CD14-positive monocyte (primary cell): ENCODE measurements at regions of chr20 and their contacts with region 1.

Region 1: DNA sequence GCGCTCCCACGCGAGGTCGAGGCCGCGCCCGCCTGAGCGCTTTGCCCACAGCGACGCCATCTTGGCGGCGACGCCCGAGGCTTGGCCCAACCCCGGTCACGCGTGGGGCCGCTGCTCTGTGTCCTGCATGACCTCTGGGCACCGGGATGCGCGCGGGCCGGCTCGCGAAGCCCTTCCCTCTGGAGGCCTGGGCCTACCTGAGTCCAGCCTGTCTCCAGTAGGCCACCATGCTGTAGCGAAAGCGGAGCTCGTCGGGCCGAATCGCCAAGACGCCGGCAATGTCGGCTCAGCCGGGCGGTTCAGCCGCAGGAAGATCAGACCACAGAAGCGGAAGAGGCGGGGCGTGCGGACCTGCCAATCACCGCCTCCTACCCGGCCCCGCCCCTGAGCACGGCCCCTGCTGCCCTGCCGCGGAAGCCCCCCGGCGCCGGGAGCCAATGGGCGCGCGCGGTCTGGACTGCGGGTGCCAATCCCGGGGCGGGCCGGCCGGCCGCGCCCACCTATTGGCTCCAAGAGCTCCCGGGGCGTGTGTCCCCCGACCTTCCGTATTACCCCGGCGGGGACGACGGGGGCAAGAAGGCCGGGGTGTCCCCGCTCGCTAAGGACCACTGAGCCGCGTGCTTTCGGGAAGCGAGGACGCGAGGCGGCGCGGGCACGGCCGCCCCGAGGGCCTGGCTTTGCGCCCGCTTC is at the start of gene ATP5F1E:
- DNase-seq: peak; percentile 94 to 95 (median 94)
- H3K4me3 ChIP-seq: peak within 1 kb of the TSS; percentile 53 to 83 (median 79)
- H3K4me3 Mint-ChIP-seq: peak within 1 kb of the TSS; percentile 94 to 97
- H3K27ac ChIP-seq: peak within 1 kb of the TSS; percentile 78 to 88
- H3K27ac Mint-ChIP-seq: peak within 1 kb of the TSS; percentile 94 to 99 (median 97)
- H3K4me1 ChIP-seq: peaks cover 23 to 41% of the 10 kb centered on the region in 2 donors
- H3K4me1 Mint-ChIP-seq: peaks cover 44% of the 10 kb centered on the region
- H3K27me3 ChIP-seq: no peaks in the 10 kb centered on the region
- H3K27me3 Mint-ChIP-seq: peaks cover 0 to 2% (median 0%) of the 10 kb centered on the region in 3 donors
- CTCF ChIP-seq: no peak
- polyA plus RNA-seq, gene ATP5F1E: 39.0 to 105 (median 102) TPM

Region 2: GRCh38 chr20:58980700-58981627 is 51.2 kb before region 1 on chr20 and contains the start of gene NELFCD:
- intact Hi-C with region 1: loop called in 1 of 2 experiments (anchors 10 kb)
- DNase-seq: peak; percentile 65 to 78 (median 77)
- H3K4me3 ChIP-seq: peak within 1 kb of the TSS; percentile 67 to 92 (median 86)
- H3K4me3 Mint-ChIP-seq: peak within 1 kb of the TSS; percentile 80 to 92
- H3K27ac ChIP-seq: peak within 1 kb of the TSS; percentile 46 to 80
- H3K27ac Mint-ChIP-seq: peak within 1 kb of the TSS; percentile 75 to 90 (median 82)
- H3K4me1 ChIP-seq: peaks cover 20 to 32% of the 10 kb centered on the region in 2 donors
- H3K4me1 Mint-ChIP-seq: peaks cover 31% of the 10 kb centered on the region
- H3K27me3 ChIP-seq: no peaks in the 10 kb centered on the region
- H3K27me3 Mint-ChIP-seq: peaks cover 0 to 4% (median 1%) of the 10 kb centered on the region in 3 donors
- CTCF ChIP-seq: no peak
- polyA plus RNA-seq, gene NELFCD: 49.0 to 74.8 (median 50.1) TPM

Region 3: DNA sequence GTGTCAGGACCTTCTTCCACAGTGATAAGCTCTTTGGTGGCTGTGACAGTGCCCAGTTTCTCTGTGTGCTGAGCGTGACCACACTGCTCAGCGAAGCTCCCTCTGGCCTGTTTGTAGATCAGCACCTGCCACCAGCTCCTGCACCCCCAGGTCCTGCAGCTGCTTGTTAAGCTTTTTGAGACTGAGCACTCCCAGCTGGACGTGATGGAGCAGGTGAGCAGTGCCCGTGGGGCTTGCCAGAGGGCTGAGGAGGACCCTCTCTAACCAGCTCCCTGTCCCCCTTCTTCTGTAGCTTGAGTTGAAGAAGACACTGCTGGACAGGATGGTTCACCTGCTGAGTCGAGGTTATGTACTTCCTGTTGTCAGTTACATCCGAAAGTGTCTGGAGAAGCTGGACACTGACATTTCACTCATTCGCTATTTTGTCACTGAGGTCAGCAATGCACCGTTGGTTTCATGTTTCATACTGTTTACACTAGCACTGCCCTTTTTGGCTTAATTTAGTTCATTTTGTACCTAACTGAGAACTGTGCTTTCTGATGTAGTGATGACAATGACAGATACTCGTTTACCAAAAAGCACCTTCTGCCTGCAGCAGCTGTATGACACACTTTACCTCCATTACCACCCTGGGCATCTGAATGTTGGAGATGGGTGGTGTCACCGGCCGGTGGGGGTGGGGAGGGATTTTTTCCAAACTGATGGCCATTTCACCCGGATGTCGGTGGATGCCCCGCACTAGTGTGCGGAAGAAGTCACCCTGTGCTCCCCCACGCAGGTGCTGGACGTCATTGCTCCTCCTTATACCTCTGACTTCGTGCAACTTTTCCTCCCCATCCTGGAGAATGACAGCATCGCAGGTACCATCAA is 38.6 kb before region 1 on chr20:
- intact Hi-C with region 1: loop called (anchors 5 to 10 kb)
- DNase-seq: no peak
- H3K4me3 ChIP-seq: no peak overlapping the region
- H3K4me3 Mint-ChIP-seq: no peak overlapping the region
- H3K27ac ChIP-seq: peak overlapping the region in 1 of 2 donors; percentile 53
- H3K27ac Mint-ChIP-seq: peak overlapping the region in 5 of 7 donors; percentile 2 to 63 (median 30)
- H3K4me1 ChIP-seq: peaks cover 0 to 3% of the 10 kb centered on the region in 2 donors
- H3K4me1 Mint-ChIP-seq: peaks cover 7% of the 10 kb centered on the region
- H3K27me3 ChIP-seq: no peaks in the 10 kb centered on the region
- H3K27me3 Mint-ChIP-seq: peaks cover 0 to 4% (median 0%) of the 10 kb centered on the region in 3 donors
- CTCF ChIP-seq: no peak